PC-9 (cell line): ENCODE measurements at regions of chr1 and their contacts with region 1.

Region 1: DNA sequence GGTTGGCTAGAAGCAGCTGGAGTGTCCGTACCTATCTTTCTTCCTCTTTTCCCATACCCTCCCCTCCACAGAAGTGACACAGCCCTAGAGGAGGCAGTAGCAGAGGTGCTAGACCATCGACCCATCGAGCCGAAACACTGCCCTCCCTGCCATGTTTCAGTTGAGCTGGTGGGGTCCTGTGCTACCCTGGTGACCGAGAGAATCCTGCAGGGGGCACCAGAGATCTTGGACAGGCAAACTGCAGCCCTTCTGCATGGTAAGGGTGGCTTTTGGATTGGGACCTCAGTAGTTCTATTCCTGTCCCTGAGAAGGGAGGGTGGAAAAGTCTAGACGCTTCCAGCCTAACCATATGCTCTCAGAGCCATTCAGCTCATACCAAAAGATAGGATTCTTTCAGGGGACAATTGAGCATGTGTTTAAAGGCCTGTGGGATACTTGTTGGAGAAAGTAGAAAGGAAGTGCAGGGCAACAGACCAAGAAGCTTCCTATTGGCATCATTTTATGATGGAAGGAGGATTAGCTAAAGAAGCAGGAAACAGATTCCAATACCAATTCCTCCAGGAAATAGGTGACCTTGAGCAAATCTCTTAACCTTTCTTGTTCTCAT is 11.7 kb upstream of the BNIPL start:
- DNase-seq: peak in 1 of 2 experiments; percentile 62
- H3K4me3 ChIP-seq: no peak overlapping the region
- H3K27ac ChIP-seq: no peak overlapping the region
- H3K4me1 ChIP-seq: no peaks in the 10 kb centered on the region
- H3K27me3 ChIP-seq: no peaks in the 10 kb centered on the region
- CTCF ChIP-seq: peak; percentile 79

Region 2: DNA sequence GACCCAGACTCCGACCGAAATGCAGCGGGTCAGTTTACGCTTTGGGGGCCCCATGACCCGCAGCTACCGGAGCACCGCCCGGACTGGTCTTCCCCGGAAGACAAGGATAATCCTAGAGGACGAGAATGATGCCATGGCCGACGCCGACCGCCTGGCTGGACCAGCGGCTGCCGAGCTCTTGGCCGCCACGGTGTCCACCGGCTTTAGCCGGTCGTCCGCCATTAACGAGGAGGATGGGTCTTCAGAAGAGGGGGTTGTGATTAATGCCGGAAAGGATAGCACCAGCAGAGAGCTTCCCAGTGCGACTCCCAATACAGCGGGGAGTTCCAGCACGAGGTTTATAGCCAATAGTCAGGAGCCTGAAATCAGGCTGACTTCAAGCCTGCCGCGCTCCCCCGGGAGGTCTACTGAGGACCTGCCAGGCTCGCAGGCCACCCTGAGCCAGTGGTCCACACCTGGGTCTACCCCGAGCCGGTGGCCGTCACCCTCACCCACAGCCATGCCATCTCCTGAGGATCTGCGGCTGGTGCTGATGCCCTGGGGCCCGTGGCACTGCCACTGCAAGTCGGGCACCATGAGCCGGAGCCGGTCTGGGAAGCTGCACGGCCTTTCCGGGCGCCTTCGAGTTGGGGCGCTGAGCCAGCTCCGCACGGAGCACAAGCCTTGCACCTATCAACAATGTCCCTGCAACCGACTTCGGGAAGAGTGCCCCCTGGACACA is 23.4 kb after region 1 on chr1:
- CTCF ChIA-PET with region 1: interaction called, 3 read pairs
- POLR2A ChIA-PET with region 1: no interaction called
- intact Hi-C with region 1: loop called (anchors 2 kb)
- DNase-seq: peak; percentile 57 to 63
- H3K4me3 ChIP-seq: peak overlapping the region; percentile 66
- H3K27ac ChIP-seq: peak overlapping the region; percentile 9
- H3K4me1 ChIP-seq: peaks cover 5% of the 10 kb centered on the region
- H3K27me3 ChIP-seq: no peaks in the 10 kb centered on the region
- CTCF ChIP-seq: no peak; the same call in 1 of the 2 replicates

Region 3: GRCh38 chr1:151156515-151156819 is 131.8 kb after region 1 on chr1 and contains the start of gene TNFAIP8L2:
- CTCF ChIA-PET with region 1: interaction called, 15 read pairs
- POLR2A ChIA-PET with region 1: no interaction called
- intact Hi-C with region 1: loop called (anchors 1 kb)
- DNase-seq: no peak
- H3K4me3 ChIP-seq: no peak within 1 kb of the TSS
- H3K27ac ChIP-seq: no peak within 1 kb of the TSS
- H3K4me1 ChIP-seq: no peaks in the 10 kb centered on the region
- H3K27me3 ChIP-seq: no peaks in the 10 kb centered on the region
- CTCF ChIP-seq: no peak
- total RNA-seq, gene TNFAIP8L2: not detected in 2 replicates